K562 (cell line): ENCODE measurements at regions of chr1 and their contacts with region 1.

Region 1: DNA sequence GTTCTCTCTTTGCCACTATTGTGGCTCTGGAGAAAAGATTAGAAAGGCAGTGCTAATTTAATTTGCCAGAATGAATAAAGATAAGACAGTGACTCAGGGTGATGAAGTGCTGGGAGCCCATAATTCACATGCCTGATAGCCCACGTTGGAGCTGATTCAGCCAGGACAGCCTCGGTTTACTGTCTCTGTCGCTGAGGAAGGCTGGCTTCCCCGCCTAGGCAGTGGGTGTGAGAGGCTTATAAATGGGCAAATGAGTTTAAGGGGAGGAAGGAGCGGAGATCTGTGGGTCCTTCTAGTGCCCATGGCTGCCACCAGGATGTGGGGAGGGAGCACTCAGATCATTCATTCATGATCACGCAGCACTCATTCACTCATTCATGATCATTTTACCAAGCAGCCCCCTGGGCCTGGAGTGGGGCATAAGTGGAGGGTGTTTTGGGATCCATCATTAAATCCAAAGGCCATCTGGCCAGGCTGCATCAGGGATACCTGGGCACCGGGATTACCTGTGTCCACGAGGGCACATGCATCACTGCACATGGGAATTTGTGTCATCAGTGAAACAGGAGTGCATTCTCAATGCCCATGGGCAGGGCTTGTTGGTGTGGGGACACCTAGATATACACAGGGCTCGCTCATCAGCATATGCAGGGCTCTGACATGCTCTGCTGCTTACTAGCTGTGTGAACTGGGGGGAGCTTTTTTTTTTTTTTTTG is 315.4 kb downstream of the MATN1 start:
- DNase-seq: no peak
- ATAC-seq: no peak
- H3K4me3 ChIP-seq: no peak overlapping the region
- H3K27ac ChIP-seq: no peak overlapping the region
- H3K4me1 ChIP-seq: no peaks in the 10 kb centered on the region
- H3K27me3 ChIP-seq: peaks cover 4 to 26% of the 10 kb centered on the region in 2 experiments; a peak in 3 of 5 replicates
- CTCF ChIP-seq: no peak
- EP300 ChIP-seq: no peak
- POLR2A ChIP-seq: no peak
- RAD21 ChIP-seq: no peak

Region 2: GRCh38 chr1:29395736-29396437 is 1012.1 kb before region 1 on chr1:
- CTCF ChIA-PET with region 1: no interaction called
- POLR2A ChIA-PET with region 1: no interaction called
- in situ Hi-C with region 1: loop called (anchors 5 kb)
- intact Hi-C with region 1: loop called (anchors 2 kb)
- DNase-seq: no peak
- ATAC-seq: no peak
- H3K4me3 ChIP-seq: no peak overlapping the region
- H3K27ac ChIP-seq: no peak overlapping the region
- H3K4me1 ChIP-seq: peaks cover 0 to 6% of the 10 kb centered on the region in 2 experiments; a peak in 1 of 5 replicates
- H3K27me3 ChIP-seq: no peaks in the 10 kb centered on the region; a peak in 1 of 5 replicates
- CTCF ChIP-seq: no peak
- EP300 ChIP-seq: no peak
- POLR2A ChIP-seq: no peak
- RAD21 ChIP-seq: no peak